Activated CD4-positive, alpha-beta T cell treated with anti-CD3 and anti-CD28 coated beads, Interleukin-2, amount 10 ng/mL, durations not matched to agents 24 days and 14 days (primary cell): ENCODE measurements at regions of chr9 and their contacts with region 1.

Region 1: DNA sequence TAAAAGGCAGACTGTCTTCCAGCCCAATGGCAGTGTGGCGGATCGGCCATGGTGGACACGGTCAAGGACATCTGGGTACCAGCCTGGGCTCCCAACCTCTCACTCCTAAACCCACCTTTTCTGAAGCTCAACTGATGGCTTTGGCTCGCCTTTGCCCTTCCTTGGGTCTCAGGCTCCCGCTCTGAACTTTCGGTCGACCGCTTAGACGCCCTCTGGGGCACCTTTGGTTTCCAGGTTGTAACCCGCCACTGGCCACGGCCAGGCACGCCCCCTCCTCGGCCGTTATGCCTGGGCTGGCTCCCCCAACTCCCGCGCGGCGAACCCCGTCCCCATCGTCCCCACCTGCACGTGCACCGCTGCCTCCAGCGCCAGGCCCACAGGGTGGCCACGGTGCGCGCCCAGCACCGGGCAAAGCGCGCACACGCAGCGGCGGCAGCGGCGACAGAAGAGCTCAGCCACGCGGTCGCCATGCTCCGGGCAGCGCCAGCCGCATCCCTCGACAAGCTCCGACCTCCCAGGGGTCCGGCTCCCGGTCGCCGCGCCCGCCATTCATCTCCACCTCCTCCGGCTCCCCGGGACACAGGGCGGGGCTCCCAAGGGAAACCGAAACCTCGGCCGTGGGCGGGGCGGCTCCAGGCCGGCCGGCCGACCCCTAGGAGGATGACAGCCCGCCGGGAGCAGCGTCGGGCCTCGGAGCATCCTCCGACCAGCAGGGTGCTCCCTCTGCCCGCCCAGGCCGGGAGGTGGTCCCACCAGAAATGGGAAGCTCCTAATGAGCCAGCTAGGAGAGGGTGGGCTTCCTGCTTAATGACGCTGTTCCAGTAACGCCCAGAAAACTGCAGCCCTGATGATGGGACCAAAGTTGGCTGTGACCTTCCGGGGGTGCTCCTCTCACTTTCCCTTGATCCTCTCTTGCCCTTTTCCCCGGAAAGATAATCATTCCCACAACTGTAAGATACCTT is at the start of gene TRIM14:
- DNase-seq: peak; percentile 93
- H3K4me3 Mint-ChIP-seq: peak within 1 kb of the TSS; percentile 87
- H3K27ac Mint-ChIP-seq: peak within 1 kb of the TSS; percentile 89
- H3K4me1 Mint-ChIP-seq: peaks cover 36% of the 10 kb centered on the region
- H3K27me3 Mint-ChIP-seq: no peaks in the 10 kb centered on the region
- total RNA-seq, gene TRIM14: 47.3 and 47.8 TPM in 2 replicates

Region 2: DNA sequence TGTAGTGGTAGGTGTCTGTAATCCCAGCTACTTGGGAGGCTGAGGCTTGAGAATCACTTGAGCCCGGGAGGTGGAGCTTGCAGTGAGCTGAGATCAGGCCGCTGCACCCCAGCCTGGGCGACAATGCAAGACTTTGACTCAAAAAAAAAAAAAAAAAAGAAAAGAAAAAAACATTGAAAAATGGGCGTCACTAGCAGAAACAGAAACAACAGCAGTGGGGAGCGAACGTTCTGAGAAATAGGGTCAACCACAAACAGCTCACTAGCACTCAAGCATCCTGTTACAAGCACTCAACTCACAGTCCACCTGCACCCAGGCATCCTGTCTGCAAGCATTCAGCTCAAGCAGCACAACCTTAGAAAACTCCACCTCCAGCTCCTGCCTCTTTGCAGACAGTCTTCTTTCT is 17.1 kb before region 1 on chr9:
- intact Hi-C with region 1: loop called (anchors 1 kb)
- DNase-seq: peak; percentile 95
- H3K4me3 Mint-ChIP-seq: peak overlapping the region; percentile 80
- H3K27ac Mint-ChIP-seq: peak overlapping the region; percentile 93
- H3K4me1 Mint-ChIP-seq: peaks cover 73% of the 10 kb centered on the region
- H3K27me3 Mint-ChIP-seq: no peaks in the 10 kb centered on the region

Region 3: GRCh38 chr9:98108531-98109031 is 10.3 kb before region 1 on chr9:
- intact Hi-C with region 1: loop called (anchors 1 kb)
- DNase-seq: peak; percentile 88
- H3K4me3 Mint-ChIP-seq: peak overlapping the region; percentile 68
- H3K27ac Mint-ChIP-seq: peak overlapping the region; percentile 97
- H3K4me1 Mint-ChIP-seq: peaks cover 70% of the 10 kb centered on the region
- H3K27me3 Mint-ChIP-seq: no peaks in the 10 kb centered on the region

Region 4: GRCh38 chr9:98192503-98193335 is 73.8 kb after region 1 on chr9 and contains the start of gene CORO2A:
- intact Hi-C with region 1: loop called (anchors 5 kb)
- DNase-seq: peak; percentile 93
- H3K4me3 Mint-ChIP-seq: peak within 1 kb of the TSS; percentile 83
- H3K27ac Mint-ChIP-seq: peak within 1 kb of the TSS; percentile 65
- H3K4me1 Mint-ChIP-seq: peaks cover 10% of the 10 kb centered on the region
- H3K27me3 Mint-ChIP-seq: peaks cover 7% of the 10 kb centered on the region
- total RNA-seq, gene CORO2A: 0.92 and 1.4 TPM in 2 replicates